HCT116 (cell line): ENCODE measurements at regions of chr7 and their contacts with region 1.

Region 1: GRCh38 chr7:12031638-12032037 is 179.5 kb upstream of the TMEM106B start:
- DNase-seq: peak; percentile 36
- ATAC-seq: peak; percentile 68
- H3K4me3 ChIP-seq: peak overlapping the region in 1 of 2 experiments; percentile 33; a peak in 1 of 4 replicates
- H3K27ac ChIP-seq: no peak overlapping the region
- H3K4me1 ChIP-seq: peaks cover 2 to 17% of the 10 kb centered on the region in 2 experiments; a peak in 3 of 4 replicates
- H3K27me3 ChIP-seq: no peaks in the 10 kb centered on the region
- CTCF ChIP-seq: no peak
- POLR2A ChIP-seq: no peak
- RAD21 ChIP-seq: no peak

Region 2: GRCh38 chr7:11579141-11579540 is 452.5 kb before region 1 on chr7:
- CTCF ChIA-PET with region 1: no interaction called
- POLR2A ChIA-PET with region 1: no interaction called
- RAD21 ChIA-PET with region 1: no interaction called
- intact Hi-C with region 1: no loop called
- DNase-seq: no peak
- ATAC-seq: no peak
- H3K4me3 ChIP-seq: no peak overlapping the region
- H3K27ac ChIP-seq: no peak overlapping the region
- H3K4me1 ChIP-seq: no peaks in the 10 kb centered on the region
- H3K27me3 ChIP-seq: no peaks in the 10 kb centered on the region
- CTCF ChIP-seq: no peak
- POLR2A ChIP-seq: no peak
- RAD21 ChIP-seq: no peak

Region 3: GRCh38 chr7:11881680-11882079 is 150.0 kb before region 1 on chr7:
- CTCF ChIA-PET with region 1: no interaction called
- POLR2A ChIA-PET with region 1: no interaction called
- RAD21 ChIA-PET with region 1: no interaction called
- intact Hi-C with region 1: loop called (anchors 5 kb)
- DNase-seq: no peak
- ATAC-seq: no peak
- H3K4me3 ChIP-seq: no peak overlapping the region
- H3K27ac ChIP-seq: no peak overlapping the region
- H3K4me1 ChIP-seq: no peaks in the 10 kb centered on the region
- H3K27me3 ChIP-seq: no peaks in the 10 kb centered on the region
- CTCF ChIP-seq: no peak
- POLR2A ChIP-seq: no peak
- RAD21 ChIP-seq: no peak